Mammary epithelial cell (primary cell): ENCODE measurements at regions of chr1 and their contacts with region 1.

Region 1: GRCh38 chr1:12619792-12620487 is 1.9 kb upstream of the DHRS3 start:
- DNase-seq: peak; percentile 73
- H3K4me3 ChIP-seq: peak overlapping the region; percentile 6 to 87 (median 49)
- H3K27ac ChIP-seq: peak overlapping the region; percentile 89
- H3K4me1 ChIP-seq: peaks cover 22% of the 10 kb centered on the region
- H3K27me3 ChIP-seq: no peaks in the 10 kb centered on the region
- CTCF ChIP-seq: peak; percentile 98

Region 2: GRCh38 chr1:12229835-12230548 is 389.9 kb before region 1 on chr1 and contains the start of gene VPS13D:
- CTCF ChIA-PET with region 1: no interaction called
- dilution Hi-C with region 1: no loop called
- in situ Hi-C with region 1: no loop called
- intact Hi-C with region 1: loop called (anchors 1 kb)
- DNase-seq: peak; percentile 72
- H3K4me3 ChIP-seq: peak within 1 kb of the TSS; percentile 63 to 72 (median 69)
- H3K27ac ChIP-seq: peak within 1 kb of the TSS; percentile 63
- H3K4me1 ChIP-seq: peaks cover 19% of the 10 kb centered on the region
- H3K27me3 ChIP-seq: no peaks in the 10 kb centered on the region
- CTCF ChIP-seq: peak; percentile 84 to 92
- total RNA-seq, gene VPS13D: 57.3 to 64.7 TPM

Region 3: GRCh38 chr1:12359359-12360133 is 260.4 kb before region 1 on chr1:
- CTCF ChIA-PET with region 1: no interaction called
- dilution Hi-C with region 1: no loop called
- in situ Hi-C with region 1: no loop called
- intact Hi-C with region 1: loop called (anchors 5 kb)
- DNase-seq: peak; percentile 9
- H3K4me3 ChIP-seq: no peak overlapping the region
- H3K27ac ChIP-seq: no peak overlapping the region
- H3K4me1 ChIP-seq: no peaks in the 10 kb centered on the region
- H3K27me3 ChIP-seq: no peaks in the 10 kb centered on the region
- CTCF ChIP-seq: no peak

Region 4: DNA sequence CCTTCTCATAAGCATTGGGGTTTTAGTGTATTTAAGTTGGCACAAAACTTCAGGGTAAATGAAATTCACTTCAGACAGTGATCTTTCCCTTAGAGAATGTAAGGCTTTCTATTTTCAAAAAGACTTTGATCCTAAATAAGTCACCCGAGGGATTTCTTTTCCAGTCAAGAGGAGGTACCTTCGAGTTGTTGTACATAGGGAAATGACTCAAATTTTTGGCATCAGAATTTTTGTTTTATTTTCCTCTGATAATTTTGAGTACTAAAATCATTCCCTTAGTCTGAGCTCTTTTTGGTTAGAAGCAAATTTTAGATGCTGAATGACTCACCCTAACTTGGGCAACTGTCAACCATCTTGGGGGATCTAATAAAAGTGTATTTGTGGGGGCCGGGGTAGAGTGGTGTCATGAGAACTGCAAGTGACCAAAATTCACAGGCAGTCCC is 195.8 kb before region 1 on chr1:
- CTCF ChIA-PET with region 1: no interaction called
- dilution Hi-C with region 1: no loop called
- in situ Hi-C with region 1: no loop called
- intact Hi-C with region 1: loop called (anchors 5 kb)
- DNase-seq: no peak
- H3K4me3 ChIP-seq: no peak overlapping the region
- H3K27ac ChIP-seq: no peak overlapping the region
- H3K4me1 ChIP-seq: no peaks in the 10 kb centered on the region
- H3K27me3 ChIP-seq: no peaks in the 10 kb centered on the region
- CTCF ChIP-seq: no peak

Region 5: DNA sequence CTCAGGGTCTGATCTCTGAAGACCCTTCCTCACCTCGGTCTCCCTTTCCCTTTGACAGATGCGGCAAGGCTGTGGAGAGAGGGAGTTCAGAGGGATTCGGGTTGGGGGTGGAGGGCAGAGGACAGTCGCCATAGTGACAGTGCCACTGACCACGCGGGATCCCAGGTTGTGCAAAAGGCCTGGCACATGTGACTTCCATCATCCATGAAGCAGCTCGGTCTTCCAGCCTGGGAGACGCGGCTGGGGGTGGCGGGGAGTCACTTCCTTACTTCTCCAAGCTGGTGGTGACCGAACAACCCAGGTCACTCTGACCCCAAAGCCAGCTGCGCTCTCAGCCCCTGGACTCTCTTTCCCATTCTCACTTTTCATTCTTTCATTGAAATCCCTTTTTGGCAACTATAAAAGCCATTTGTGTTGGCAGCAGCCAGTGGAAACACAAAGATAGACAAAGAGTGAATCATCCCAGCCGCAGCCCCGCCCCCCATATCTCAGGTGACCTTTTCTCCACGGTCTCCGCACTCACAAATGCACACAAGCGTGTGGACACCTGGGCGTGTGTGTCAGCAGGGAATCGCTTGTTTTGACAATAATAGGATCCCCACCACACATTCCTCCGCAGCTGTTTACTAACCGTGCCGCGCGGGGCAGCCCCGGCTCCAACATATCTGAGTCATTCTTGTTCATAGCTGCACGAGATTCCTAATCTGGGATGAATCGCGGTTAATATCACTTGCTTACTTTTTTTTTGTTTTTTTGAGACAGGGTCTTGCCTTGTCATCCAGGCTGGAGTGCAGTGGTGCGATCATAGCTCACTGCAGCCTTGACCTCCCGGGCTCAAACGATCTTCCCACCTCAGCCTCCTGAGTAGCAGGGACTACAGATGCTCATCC is 70.2 kb before region 1 on chr1:
- CTCF ChIA-PET with region 1: no interaction called
- dilution Hi-C with region 1: no loop called
- in situ Hi-C with region 1: no loop called
- intact Hi-C with region 1: loop called (anchors 1 kb)
- DNase-seq: peak; percentile 97
- H3K4me3 ChIP-seq: peak overlapping the region in 1 of 3 experiments; percentile 8
- H3K27ac ChIP-seq: peak overlapping the region; percentile 47
- H3K4me1 ChIP-seq: peaks cover 15% of the 10 kb centered on the region
- H3K27me3 ChIP-seq: peaks cover 7% of the 10 kb centered on the region
- CTCF ChIP-seq: no peak

Region 6: DNA sequence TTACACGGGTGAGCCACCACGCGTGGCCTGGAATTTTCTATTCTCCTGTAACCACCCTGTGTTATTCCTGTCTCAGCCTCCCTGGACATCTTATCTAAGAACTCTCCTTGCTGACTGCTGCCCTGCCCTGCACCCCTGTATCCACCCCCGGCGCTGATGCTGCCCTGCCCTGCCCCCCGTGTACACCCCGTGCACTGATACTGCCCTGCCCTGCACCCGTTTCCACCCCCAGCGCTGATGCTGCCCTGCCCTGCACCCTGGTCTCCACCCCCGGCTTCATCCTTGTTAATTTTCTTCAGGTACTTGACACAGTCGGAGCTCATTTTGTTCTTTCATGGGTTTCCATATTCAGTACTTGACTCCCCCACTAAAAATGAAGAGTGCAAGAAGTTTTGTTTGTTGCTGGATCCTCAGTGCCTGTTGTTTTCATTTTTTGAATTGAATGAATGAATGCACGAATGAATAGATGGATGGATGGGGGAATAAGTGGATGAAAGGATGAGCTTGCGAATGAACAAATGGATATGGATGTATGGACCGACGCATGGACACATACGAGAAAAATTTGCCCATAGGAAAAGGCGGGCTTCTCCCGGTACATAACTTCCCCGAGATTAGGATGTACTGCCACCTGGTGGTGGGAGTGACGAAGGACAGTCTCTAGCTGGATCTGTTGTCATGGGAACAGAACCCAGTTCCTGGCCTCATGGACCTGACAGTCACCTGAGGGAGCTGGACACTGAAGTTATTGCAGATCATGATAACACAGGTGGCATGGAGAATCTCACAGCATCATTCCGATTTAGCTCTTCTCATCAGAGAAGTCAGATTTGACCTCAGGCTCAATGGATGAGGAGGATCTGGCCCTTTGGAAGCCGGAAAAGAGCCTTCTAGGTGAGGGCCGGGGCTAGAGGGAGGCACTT is 38.9 kb after region 1 on chr1:
- CTCF ChIA-PET with region 1: no interaction called
- dilution Hi-C with region 1: no loop called
- in situ Hi-C with region 1: no loop called
- intact Hi-C with region 1: loop called (anchors 2 kb)
- DNase-seq: peak; percentile 67
- H3K4me3 ChIP-seq: no peak overlapping the region
- H3K27ac ChIP-seq: no peak overlapping the region
- H3K4me1 ChIP-seq: no peaks in the 10 kb centered on the region
- H3K27me3 ChIP-seq: no peaks in the 10 kb centered on the region
- CTCF ChIP-seq: peak; percentile 95 to 96